PC-3 (cell line): ENCODE measurements at regions of chr13 and their contacts with region 1.

Region 1: GRCh38 chr13:96141027-96141426 is 51.1 kb downstream of the HS6ST3 start:
- DNase-seq: peak; percentile 51
- ATAC-seq: peak; percentile 45; the same call in 1 of the 2 replicates
- H3K4me3 ChIP-seq: no peak overlapping the region
- H3K27ac ChIP-seq: no peak overlapping the region
- H3K4me1 ChIP-seq: no peaks in the 10 kb centered on the region
- H3K27me3 ChIP-seq: no peaks in the 10 kb centered on the region
- CTCF ChIP-seq: peak; percentile 43

Region 2: GRCh38 chr13:96130818-96131340 is 10.1 kb before region 1 on chr13:
- CTCF ChIA-PET with region 1: interaction called, 10 read pairs
- POLR2A ChIA-PET with region 1: no interaction called
- intact Hi-C with region 1: no loop called
- DNase-seq: no peak
- ATAC-seq: no peak
- H3K4me3 ChIP-seq: no peak overlapping the region
- H3K27ac ChIP-seq: no peak overlapping the region
- H3K4me1 ChIP-seq: no peaks in the 10 kb centered on the region
- H3K27me3 ChIP-seq: no peaks in the 10 kb centered on the region; the same call in 1 of the 2 replicates
- CTCF ChIP-seq: no peak

Region 3: GRCh38 chr13:96796091-96796633 is 655.1 kb after region 1 on chr13:
- CTCF ChIA-PET with region 1: no interaction called
- POLR2A ChIA-PET with region 1: no interaction called
- intact Hi-C with region 1: loop called (anchors 1 kb)
- DNase-seq: peak; percentile 6
- ATAC-seq: peak; percentile 27; the same call in 1 of the 2 replicates
- H3K4me3 ChIP-seq: no peak overlapping the region
- H3K27ac ChIP-seq: no peak overlapping the region
- H3K4me1 ChIP-seq: no peaks in the 10 kb centered on the region
- H3K27me3 ChIP-seq: no peaks in the 10 kb centered on the region
- CTCF ChIP-seq: peak; percentile 45

Region 4: DNA sequence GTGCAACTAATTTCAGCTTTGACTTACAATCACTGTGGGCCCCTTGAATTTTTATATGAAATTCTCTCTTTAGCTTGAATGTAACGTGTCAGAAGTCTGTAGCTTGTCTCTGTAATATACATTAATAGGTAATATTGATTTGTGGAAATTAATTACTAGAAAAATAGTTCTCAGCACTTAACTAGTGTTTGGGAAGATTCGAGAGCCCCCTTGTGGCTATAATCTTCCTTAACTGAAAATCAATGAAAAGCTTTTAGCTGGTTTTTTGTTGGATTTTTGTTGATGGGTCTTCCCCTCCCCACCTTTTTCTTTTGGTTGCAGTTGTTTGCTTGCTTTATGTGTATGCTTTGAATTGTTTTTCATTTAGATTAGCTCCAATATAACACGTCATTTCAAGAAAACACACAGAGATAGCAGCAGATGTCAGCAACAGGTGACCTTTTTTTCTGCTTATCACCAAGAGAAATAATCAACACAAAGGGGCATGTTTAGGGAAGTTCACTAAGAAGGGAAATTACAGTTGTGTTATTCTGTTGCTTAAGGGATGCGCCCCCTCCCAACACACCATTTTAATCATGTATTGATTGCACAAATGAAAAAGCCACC is 676.4 kb after region 1 on chr13:
- CTCF ChIA-PET with region 1: interaction called, 20 read pairs
- POLR2A ChIA-PET with region 1: no interaction called
- intact Hi-C with region 1: loop called (anchors 2 kb)
- DNase-seq: peak; percentile 50
- ATAC-seq: no peak
- H3K4me3 ChIP-seq: no peak overlapping the region
- H3K27ac ChIP-seq: no peak overlapping the region
- H3K4me1 ChIP-seq: no peaks in the 10 kb centered on the region
- H3K27me3 ChIP-seq: no peaks in the 10 kb centered on the region
- CTCF ChIP-seq: peak; percentile 69

Region 5: GRCh38 chr13:96958286-96958891 is 817.4 kb after region 1 on chr13:
- CTCF ChIA-PET with region 1: no interaction called
- POLR2A ChIA-PET with region 1: no interaction called
- intact Hi-C with region 1: loop called (anchors 5 kb)
- DNase-seq: peak; percentile 60
- ATAC-seq: 0 out of 2 replicates have a peak, but pooled peaks have one; percentile 31
- H3K4me3 ChIP-seq: no peak overlapping the region
- H3K27ac ChIP-seq: no peak overlapping the region
- H3K4me1 ChIP-seq: no peaks in the 10 kb centered on the region
- H3K27me3 ChIP-seq: peaks cover 33% of the 10 kb centered on the region
- CTCF ChIP-seq: peak; percentile 69